ENCODE measurements at regions of chr16 and their contacts with region 1.

Region 1: DNA sequence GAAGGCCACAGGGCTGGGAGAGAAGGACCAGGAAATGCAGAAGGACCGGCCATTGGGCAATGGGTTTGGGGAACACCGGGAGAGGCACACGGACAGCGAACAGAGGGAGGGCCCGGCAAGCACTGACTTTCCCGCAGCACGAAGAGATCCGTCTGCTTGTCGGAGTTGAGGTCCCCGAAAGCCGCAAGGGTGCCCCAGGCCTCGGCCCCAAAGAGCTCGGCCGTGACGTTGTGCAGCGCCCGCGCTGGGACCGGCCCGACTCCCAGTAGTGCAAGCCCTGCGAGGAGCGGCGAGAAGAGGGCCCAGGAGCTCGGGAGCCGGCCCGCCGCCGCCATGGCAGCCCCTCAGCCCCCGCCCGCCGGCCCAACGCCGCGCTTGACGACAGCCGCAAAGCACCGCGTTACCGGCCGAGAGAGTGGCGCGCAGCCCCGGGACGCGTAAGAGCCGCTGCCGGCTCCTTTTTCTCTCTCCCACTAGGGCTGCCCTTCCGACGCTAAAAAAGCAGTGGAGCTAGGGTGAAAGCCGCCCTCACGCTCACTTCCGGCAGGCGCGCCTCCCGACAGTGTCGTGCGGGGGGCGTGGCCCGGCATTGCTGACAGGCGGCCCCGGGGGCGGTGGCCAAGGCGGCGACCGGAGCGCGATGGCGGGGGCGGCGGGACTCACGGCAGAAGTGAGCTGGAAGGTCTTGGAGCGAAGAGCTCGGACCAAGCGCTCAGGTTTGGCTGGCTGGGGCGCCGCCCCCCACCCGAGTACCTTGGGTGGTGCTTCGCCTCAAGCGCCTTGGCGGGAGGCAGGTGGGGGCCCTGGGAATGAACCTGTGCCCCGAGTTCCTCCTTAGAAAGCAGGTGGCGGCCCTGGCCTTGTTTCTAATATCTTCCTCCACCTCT is at the starts of genes ITFG1 and PHKB:
- DNase-seq: peak; percentile 96
- H3K4me3 Mint-ChIP-seq: peak within 1 kb of the TSS; percentile 93
- H3K27ac Mint-ChIP-seq: peak within 1 kb of the TSS; percentile 95
- H3K4me1 Mint-ChIP-seq: peaks cover 53% of the 10 kb centered on the region
- H3K27me3 Mint-ChIP-seq: no peaks in the 10 kb centered on the region
- total RNA-seq, gene ITFG1: 20.6 to 22.0 TPM
- total RNA-seq, gene PHKB: 27.6 to 28.8 TPM

Region 2: GRCh38 chr16:46883690-46884512 is 577.1 kb before region 1 on chr16 and contains the start of gene GPT2:
- CTCF ChIA-PET with region 1: no interaction called
- POLR2A ChIA-PET with region 1: no interaction called
- intact Hi-C with region 1: loop called (anchors 5 kb)
- DNase-seq: peak; percentile 88
- H3K4me3 Mint-ChIP-seq: peak within 1 kb of the TSS; percentile 73
- H3K27ac Mint-ChIP-seq: peak within 1 kb of the TSS; percentile 72
- H3K4me1 Mint-ChIP-seq: peaks cover 18% of the 10 kb centered on the region
- H3K27me3 Mint-ChIP-seq: peaks cover 5% of the 10 kb centered on the region
- total RNA-seq, gene GPT2: 20.2 to 23.1 TPM

Region 3: GRCh38 chr16:47037746-47038458 is 423.1 kb before region 1 on chr16:
- CTCF ChIA-PET with region 1: interaction called, 9 read pairs
- POLR2A ChIA-PET with region 1: no interaction called
- intact Hi-C with region 1: loop called (anchors 5 kb)
- DNase-seq: peak; percentile 92
- H3K4me3 Mint-ChIP-seq: peak overlapping the region; percentile 71
- H3K27ac Mint-ChIP-seq: no peak overlapping the region
- H3K4me1 Mint-ChIP-seq: peaks cover 6% of the 10 kb centered on the region
- H3K27me3 Mint-ChIP-seq: peaks cover 4% of the 10 kb centered on the region

Region 4: DNA sequence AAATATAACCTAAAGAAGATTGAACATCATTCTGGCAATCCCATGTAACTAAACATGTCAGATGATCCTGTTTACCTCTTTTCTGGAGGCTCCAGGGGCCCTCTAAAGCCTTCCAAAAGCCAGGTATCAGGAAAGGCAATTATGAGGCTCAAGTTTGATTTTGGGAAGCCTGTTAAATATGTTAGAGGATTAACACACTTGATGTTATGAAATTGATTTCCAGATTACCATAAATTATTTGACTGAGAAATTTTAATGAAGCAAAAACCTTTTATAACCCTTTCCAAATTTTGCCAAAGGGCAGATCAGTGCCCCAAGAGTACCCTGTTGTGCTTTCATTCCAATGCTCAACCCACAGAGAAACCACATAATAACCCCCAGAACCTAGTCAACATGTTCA is 29.5 kb after region 1 on chr16:
- CTCF ChIA-PET with region 1: no interaction called
- POLR2A ChIA-PET with region 1: no interaction called
- intact Hi-C with region 1: loop called (anchors 1 kb)
- DNase-seq: no peak
- H3K4me3 Mint-ChIP-seq: no peak overlapping the region
- H3K27ac Mint-ChIP-seq: no peak overlapping the region
- H3K4me1 Mint-ChIP-seq: peaks cover 14% of the 10 kb centered on the region
- H3K27me3 Mint-ChIP-seq: no peaks in the 10 kb centered on the region

Region 5: GRCh38 chr16:47732523-47733111 is 271.7 kb after region 1 on chr16:
- CTCF ChIA-PET with region 1: no interaction called
- POLR2A ChIA-PET with region 1: no interaction called
- intact Hi-C with region 1: loop called (anchors 1 kb)
- DNase-seq: peak; percentile 54
- H3K4me3 Mint-ChIP-seq: no peak overlapping the region
- H3K27ac Mint-ChIP-seq: peak overlapping the region; percentile 30
- H3K4me1 Mint-ChIP-seq: peaks cover 6% of the 10 kb centered on the region
- H3K27me3 Mint-ChIP-seq: peaks cover 10% of the 10 kb centered on the region